Mammary epithelial cell (primary cell): ENCODE measurements at regions of chr22 and their contacts with region 1.

Region 1: GRCh38 chr22:40628354-40629042 is 8.0 kb downstream of the MRTFA start:
- DNase-seq: peak; percentile 84
- H3K4me3 ChIP-seq: peak overlapping the region in 1 of 3 experiments; percentile 8
- H3K27ac ChIP-seq: peak overlapping the region; percentile 52
- H3K4me1 ChIP-seq: peaks cover 22% of the 10 kb centered on the region
- H3K27me3 ChIP-seq: no peaks in the 10 kb centered on the region
- CTCF ChIP-seq: no peak

Region 2: DNA sequence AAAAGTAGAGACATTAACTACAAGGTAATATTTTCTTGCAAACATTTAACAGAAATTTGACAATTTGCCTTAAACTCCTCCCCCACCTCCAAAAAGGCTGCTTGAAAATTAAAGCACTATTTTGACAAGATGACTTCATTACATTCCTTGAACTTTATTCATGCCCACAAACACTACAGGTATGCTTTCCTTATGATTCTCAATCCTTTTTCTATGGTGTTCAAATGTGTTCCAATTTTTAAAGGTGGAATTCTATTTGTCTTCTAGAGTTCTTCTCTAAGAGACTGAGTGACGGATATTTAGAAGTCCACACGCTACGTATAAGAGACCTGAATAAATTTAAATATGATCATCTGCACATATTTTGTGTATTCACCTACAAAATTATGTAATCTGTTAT is 61.4 kb before region 1 on chr22:
- CTCF ChIA-PET with region 1: no interaction called
- dilution Hi-C with region 1: loop called (anchors 5 kb)
- in situ Hi-C with region 1: no loop called
- intact Hi-C with region 1: no loop called
- DNase-seq: peak; percentile 57
- H3K4me3 ChIP-seq: peak overlapping the region in 1 of 3 experiments; percentile 27
- H3K27ac ChIP-seq: peak overlapping the region; percentile 64
- H3K4me1 ChIP-seq: peaks cover 22% of the 10 kb centered on the region
- H3K27me3 ChIP-seq: no peaks in the 10 kb centered on the region
- CTCF ChIP-seq: no peak